GM12878 (cell line): ENCODE measurements at regions of chr16 and their contacts with region 1.

Region 1: DNA sequence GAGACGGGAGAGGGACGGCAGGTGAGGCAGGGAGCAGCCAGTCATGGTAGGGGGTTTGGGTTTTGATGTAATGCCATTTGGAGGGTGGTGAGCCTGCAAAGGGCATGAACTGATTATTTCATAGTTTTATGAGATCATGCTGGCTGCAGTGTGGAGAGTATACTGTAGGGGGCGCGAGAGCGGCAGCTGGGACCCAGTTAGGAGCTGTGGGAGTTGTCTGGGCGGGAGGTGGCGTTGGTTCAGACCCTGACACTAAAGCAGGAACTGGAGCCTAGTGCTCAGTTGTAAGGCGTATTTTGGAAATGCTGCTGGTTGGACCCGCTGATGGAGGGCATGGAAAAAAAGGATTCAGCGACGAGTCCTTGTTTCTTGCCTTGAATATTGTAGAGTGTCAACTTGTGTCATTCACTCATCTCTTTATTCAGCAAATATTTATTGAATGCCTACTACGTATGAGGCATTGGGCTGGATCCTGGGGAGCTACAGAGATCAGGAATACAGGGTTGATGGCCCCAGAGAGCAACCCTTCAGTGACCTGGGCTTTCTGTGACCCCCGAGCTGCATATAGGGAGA is 23.7 kb upstream of the KDM8 start:
- DNase-seq: peak; percentile 55
- ATAC-seq: peak; percentile 98
- H3K4me3 ChIP-seq: no peak overlapping the region
- H3K27ac ChIP-seq: no peak overlapping the region
- H3K4me1 ChIP-seq: no peaks in the 10 kb centered on the region
- H3K27me3 ChIP-seq: no peaks in the 10 kb centered on the region; a peak in 1 of 4 replicates
- CTCF ChIP-seq: peak; percentile 98 to 99 (median 98); a peak in 5 of 6 replicates
- EP300 ChIP-seq: no peak
- POLR2A ChIP-seq: no peak
- RAD21 ChIP-seq: peak; percentile 91

Region 2: DNA sequence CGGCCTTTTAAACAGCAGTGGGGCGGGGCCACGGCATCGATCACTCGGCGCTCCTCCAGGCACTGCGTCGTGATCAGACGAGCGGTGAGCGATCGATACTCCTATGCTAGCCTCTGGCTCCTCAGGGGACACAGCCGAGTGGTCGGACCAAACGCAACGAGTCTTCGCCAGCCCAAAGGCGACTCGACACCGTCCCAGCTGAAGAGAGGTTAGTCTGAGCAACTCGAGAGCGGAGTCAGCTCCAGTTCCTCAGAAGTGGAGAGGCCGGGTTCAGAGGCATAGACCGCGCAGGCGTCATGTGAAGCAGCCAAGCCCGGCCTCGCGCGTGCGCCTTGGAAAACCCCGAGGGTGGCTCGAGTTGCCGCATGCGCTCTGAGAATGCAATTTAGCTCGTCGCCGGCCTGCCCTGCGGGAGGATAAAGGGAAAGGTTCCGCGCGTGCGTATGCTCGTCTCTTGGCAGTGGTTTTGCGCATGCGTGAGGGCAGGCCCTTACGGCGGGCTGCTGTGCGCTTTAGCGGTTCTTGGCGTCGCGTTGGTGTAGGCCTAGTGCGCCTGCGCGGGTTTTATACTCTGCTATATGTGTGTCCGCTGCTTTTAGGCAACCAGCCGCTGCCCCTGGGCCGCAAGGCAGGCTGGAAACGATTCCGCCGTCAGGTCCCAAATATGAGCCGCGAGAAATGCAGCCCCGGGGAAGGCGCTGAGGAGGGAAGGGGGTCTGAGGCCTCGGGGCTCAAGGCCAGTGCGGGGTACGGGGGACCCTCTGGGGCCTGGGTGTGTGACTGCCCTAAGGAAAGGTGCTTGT is 24.0 kb after region 1 on chr16 and contains the start of gene KDM8:
- CTCF ChIA-PET with region 1: interaction called, 52 read pairs
- POLR2A ChIA-PET with region 1: interaction called, 6 read pairs
- RAD21 ChIA-PET with region 1: interaction called, 16 read pairs
- SMC1A ChIA-PET with region 1: interaction called, 26 read pairs
- in situ Hi-C with region 1: no loop called
- intact Hi-C with region 1: no loop called
- DNase-seq: peak; percentile 99
- ATAC-seq: peak; percentile 90
- H3K4me3 ChIP-seq: peak within 1 kb of the TSS; percentile 80
- H3K27ac ChIP-seq: peak within 1 kb of the TSS; percentile 97
- H3K4me1 ChIP-seq: peaks cover 25% of the 10 kb centered on the region
- H3K27me3 ChIP-seq: no peaks in the 10 kb centered on the region
- CTCF ChIP-seq: no peak
- EP300 ChIP-seq: no peak
- POLR2A ChIP-seq: peak; percentile 88
- RAD21 ChIP-seq: no peak
- polyA plus RNA-seq, gene KDM8: 0.79 to 1.3 TPM

Region 3: DNA sequence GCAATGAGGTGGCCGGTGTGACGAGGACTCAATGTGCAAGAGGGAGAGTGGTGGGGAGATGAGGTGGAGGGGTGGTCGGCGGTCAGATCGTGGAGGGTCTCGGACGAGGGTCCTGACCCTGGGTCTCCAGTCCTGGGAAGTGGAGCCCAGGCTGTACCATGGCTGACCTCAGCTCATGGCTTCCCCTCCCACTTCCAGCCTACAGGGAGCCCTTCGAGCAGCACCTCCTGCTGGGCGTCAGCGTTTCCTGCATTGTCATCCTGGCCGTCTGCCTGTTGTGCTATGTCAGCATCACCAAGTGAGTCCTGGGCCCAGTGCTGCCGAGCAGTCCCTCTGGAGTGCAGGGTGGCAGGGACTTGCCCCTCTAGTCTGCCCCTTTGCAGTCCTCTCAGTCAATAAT is 176.0 kb after region 1 on chr16:
- CTCF ChIA-PET with region 1: interaction called, 11 read pairs
- POLR2A ChIA-PET with region 1: interaction called, 4 read pairs
- RAD21 ChIA-PET with region 1: interaction called, 7 read pairs
- SMC1A ChIA-PET with region 1: interaction called, 8 read pairs
- in situ Hi-C with region 1: no loop called
- intact Hi-C with region 1: no loop called
- DNase-seq: no peak
- ATAC-seq: peak; percentile 73
- H3K4me3 ChIP-seq: no peak overlapping the region
- H3K27ac ChIP-seq: no peak overlapping the region
- H3K4me1 ChIP-seq: no peaks in the 10 kb centered on the region
- H3K27me3 ChIP-seq: no peaks in the 10 kb centered on the region
- CTCF ChIP-seq: peak; percentile 30 to 47 (median 44); a peak in 4 of 6 replicates
- EP300 ChIP-seq: no peak
- POLR2A ChIP-seq: no peak
- RAD21 ChIP-seq: peak; percentile 50; the same call in 1 of the 2 replicates

Region 4: DNA sequence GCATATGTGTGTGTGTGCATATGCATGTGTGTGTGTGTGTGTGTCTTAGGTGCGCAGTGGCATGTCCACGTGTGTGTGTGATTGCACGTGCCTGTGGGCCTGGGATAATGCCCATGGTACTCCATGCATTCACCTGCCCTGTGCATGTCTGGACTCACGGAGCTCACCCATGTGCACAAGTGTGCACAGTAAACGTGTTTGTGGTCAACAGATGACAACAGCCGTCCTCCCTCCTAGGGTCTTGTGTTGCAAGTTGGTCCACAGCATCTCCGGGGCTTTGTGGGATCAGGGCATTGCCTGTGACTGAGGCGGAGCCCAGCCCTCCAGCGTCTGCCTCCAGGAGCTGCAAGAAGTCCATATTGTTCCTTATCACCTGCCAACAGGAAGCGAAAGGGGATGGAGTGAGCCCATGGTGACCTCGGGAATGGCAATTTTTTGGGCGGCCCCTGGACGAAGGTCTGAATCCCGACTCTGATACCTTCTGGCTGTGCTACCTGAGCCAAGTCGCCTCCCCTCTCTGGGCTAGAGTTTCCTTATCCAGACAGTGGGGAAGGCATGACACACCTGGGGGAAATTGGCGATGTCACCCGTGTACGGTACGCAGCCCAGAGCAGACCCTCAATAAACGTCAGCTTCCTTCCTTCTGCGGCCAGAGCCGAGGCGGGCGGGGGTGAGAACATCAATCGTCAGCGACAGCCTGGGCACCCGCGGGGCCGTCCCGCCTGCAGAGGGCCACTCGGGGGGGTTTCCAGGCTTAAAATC is 270.0 kb after region 1 on chr16:
- CTCF ChIA-PET with region 1: interaction called, 43 read pairs
- POLR2A ChIA-PET with region 1: no interaction called
- RAD21 ChIA-PET with region 1: interaction called, 6 read pairs
- SMC1A ChIA-PET with region 1: interaction called, 8 read pairs
- in situ Hi-C with region 1: loop called (anchors 10 kb)
- intact Hi-C with region 1: no loop called
- DNase-seq: no peak
- ATAC-seq: peak; percentile 79
- H3K4me3 ChIP-seq: no peak overlapping the region
- H3K27ac ChIP-seq: peak overlapping the region; percentile 66
- H3K4me1 ChIP-seq: peaks cover 57% of the 10 kb centered on the region
- H3K27me3 ChIP-seq: no peaks in the 10 kb centered on the region
- CTCF ChIP-seq: no peak
- EP300 ChIP-seq: peak; percentile 81; a peak in 3 of 4 replicates
- POLR2A ChIP-seq: peak; percentile 76
- RAD21 ChIP-seq: 0 out of 2 replicates have a peak, but pooled peaks have one; percentile 1

Region 5: DNA sequence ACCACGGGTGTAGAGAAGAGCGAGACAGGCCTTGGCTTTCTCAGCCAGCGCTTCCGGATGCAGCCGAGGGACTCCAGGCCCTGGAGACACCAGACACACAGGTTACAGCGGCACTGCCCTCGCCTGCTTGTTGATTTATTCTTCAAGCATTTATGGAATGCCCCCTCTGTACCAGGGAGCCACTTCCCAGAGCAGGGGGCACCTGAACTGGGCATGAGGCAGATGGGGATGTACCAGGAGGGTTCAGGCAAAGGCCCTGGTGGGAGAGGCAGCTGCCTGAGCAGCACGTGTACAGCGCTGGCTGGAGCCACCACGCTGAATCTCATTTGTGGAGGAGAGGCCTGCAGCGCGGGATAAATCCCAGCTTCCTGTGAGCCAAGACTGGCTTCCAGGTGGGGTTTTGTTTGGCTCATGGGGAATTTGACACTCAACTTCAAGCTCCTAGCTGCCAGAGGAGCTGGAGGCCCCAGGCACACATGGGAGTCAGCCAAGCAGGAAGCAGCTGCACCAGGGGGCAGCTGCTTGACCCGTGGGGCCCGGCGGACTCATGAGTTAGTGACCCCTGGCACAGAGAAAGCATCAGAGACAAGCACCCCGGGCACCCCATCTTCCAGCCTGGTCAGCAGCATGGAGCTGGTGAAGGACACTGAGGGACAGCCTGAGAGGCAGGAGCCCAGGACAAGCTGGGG is 282.0 kb after region 1 on chr16:
- CTCF ChIA-PET with region 1: interaction called, 12 read pairs
- POLR2A ChIA-PET with region 1: no interaction called
- RAD21 ChIA-PET with region 1: interaction called, 5 read pairs
- SMC1A ChIA-PET with region 1: interaction called, 3 read pairs
- in situ Hi-C with region 1: loop called (anchors 10 kb)
- intact Hi-C with region 1: loop called (anchors 1 kb)
- DNase-seq: no peak
- ATAC-seq: no peak
- H3K4me3 ChIP-seq: no peak overlapping the region
- H3K27ac ChIP-seq: no peak overlapping the region
- H3K4me1 ChIP-seq: peaks cover 4% of the 10 kb centered on the region
- H3K27me3 ChIP-seq: no peaks in the 10 kb centered on the region
- CTCF ChIP-seq: no peak
- EP300 ChIP-seq: no peak
- POLR2A ChIP-seq: no peak
- RAD21 ChIP-seq: no peak